A549 (cell line): ENCODE measurements at regions of chr10 and their contacts with region 1.

Region 1: GRCh38 chr10:60208676-60209269 is 180.9 kb downstream of the ANK3 start:
- DNase-seq: peak in 1 of 2 experiments; percentile 59
- ATAC-seq: peak; percentile 60 to 67; a peak in 4 of 6 replicates
- H3K4me3 ChIP-seq: no peak overlapping the region
- H3K27ac ChIP-seq: no peak overlapping the region
- H3K4me1 ChIP-seq: no peaks in the 10 kb centered on the region
- CTCF ChIP-seq: peak; percentile 93
- EP300 ChIP-seq: no peak
- POLR2A ChIP-seq: no peak
- RAD21 ChIP-seq: peak; percentile 94 to 96

Region 2: GRCh38 chr10:59595593-59595992 is 613.2 kb before region 1 on chr10:
- CTCF ChIA-PET with region 1: no interaction called
- POLR2A ChIA-PET with region 1: no interaction called
- DNase-seq: no peak
- ATAC-seq: no peak
- H3K4me3 ChIP-seq: no peak overlapping the region
- H3K27ac ChIP-seq: no peak overlapping the region
- H3K4me1 ChIP-seq: no peaks in the 10 kb centered on the region
- CTCF ChIP-seq: no peak
- EP300 ChIP-seq: no peak
- POLR2A ChIP-seq: no peak
- RAD21 ChIP-seq: no peak

Region 3: GRCh38 chr10:60041489-60042133 is 167.2 kb before region 1 on chr10:
- CTCF ChIA-PET with region 1: no interaction called
- POLR2A ChIA-PET with region 1: no interaction called
- DNase-seq: no peak
- ATAC-seq: no peak
- H3K4me3 ChIP-seq: no peak overlapping the region
- H3K27ac ChIP-seq: no peak overlapping the region
- H3K4me1 ChIP-seq: no peaks in the 10 kb centered on the region
- CTCF ChIP-seq: no peak
- EP300 ChIP-seq: no peak
- POLR2A ChIP-seq: no peak
- RAD21 ChIP-seq: no peak

Region 4: DNA sequence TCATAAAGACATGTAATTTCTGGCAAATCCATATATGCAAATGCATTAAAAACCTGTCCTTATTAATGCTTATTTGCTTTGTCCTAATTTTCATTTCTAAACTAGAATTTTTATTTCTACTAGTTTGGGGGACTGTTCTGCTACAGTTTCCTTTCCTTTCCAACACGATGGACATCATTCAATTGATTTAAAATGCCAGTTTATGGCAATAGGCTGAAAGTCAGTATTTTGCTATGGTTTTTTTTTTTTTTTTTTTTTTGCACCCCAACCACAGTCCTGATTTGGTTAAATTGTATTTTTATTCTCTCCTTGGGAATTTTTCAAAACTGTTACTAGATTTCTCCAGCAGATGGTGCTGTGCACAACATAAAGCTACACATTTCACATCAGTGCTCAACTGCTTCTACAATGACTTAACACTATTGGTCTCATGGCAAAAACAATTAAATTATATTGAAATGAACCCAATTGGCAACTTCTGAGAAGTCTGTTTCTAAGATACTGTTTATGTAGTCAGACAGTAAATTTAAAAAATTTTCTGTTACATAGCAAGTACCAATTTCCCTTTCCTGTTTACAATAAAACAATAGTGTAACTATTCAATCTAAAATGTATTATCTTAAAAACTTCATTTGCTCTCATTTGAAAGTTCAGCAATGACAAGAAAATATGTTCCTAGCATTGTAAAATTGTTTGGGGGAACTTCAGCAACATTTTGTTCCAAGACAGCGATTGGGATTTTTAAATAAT is 108.6 kb before region 1 on chr10:
- CTCF ChIA-PET with region 1: interaction called, 209 read pairs
- POLR2A ChIA-PET with region 1: no interaction called
- DNase-seq: peak; percentile 24 to 64
- ATAC-seq: peak; percentile 59 to 80; a peak in 4 of 6 replicates
- H3K4me3 ChIP-seq: no peak overlapping the region
- H3K27ac ChIP-seq: no peak overlapping the region
- H3K4me1 ChIP-seq: peaks cover 10% of the 10 kb centered on the region; the same call in 2 of the 3 replicates
- CTCF ChIP-seq: peak; percentile 83
- EP300 ChIP-seq: no peak
- POLR2A ChIP-seq: no peak
- RAD21 ChIP-seq: peak; percentile 79 to 82

Region 5: DNA sequence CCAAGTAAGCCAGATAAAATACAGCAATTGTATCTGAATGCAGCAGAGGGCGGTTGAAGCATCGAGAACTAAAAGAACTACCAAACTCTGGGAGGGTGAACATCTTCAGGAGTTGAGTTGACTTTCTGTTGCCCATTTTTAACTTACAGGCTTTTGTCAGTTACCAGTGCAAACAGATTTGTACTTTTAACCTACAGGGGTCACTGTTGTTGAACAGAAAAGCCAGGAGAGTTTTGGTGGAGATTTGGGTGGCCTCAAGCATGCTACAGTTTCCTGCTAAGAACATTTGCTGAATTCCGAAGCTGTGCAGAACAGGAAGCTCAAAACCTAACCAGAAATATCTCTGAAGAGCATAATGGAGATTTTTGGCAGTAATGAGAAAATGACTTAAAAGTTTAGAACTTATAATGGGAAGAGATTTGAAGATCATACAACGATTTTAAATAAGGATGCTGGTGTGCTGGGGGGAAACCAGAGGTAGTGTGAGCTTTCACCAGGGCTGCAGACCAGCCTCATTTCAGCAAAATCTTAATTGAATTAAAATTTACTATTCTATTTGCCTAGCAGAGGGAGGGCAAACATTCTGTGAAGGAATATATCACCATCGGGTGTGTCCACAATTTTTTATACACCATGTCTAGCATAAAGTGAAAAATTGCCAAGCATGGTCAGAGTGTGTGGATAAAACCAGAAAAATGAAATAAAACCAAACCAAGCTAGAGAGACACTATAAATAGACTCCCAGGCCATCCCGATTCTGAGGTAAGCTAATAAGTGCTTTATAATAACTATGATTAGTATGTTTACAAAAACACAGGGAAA is 93.8 kb before region 1 on chr10:
- CTCF ChIA-PET with region 1: interaction called, 147 read pairs
- POLR2A ChIA-PET with region 1: no interaction called
- DNase-seq: peak; percentile 35 to 58
- ATAC-seq: peak; percentile 59 to 80; a peak in 5 of 6 replicates
- H3K4me3 ChIP-seq: no peak overlapping the region
- H3K27ac ChIP-seq: no peak overlapping the region
- H3K4me1 ChIP-seq: 0 out of 3 replicates have a peak, but pooled peaks cover 4% of the 10 kb centered on the region
- CTCF ChIP-seq: peak; percentile 77
- EP300 ChIP-seq: no peak
- POLR2A ChIP-seq: no peak
- RAD21 ChIP-seq: peak; percentile 81 to 87

Region 6: DNA sequence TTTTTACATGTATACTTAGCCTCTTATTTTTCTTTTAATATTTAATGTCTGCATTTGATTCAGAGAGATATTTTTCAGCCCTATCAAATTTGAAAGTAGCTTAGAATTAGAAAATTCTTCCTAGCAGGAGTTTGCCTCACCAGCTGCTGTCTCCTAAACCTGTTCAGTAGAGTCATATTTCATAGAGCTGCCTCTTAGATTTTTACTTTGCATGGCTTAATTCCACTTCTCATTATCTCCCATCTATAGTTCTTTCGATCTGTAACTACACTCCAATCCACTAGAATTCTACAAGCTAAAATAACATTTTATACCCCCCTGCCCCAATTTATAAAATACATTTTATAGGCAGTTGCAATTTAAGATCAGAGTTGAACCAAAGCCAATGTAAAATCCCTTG is 46.1 kb before region 1 on chr10:
- CTCF ChIA-PET with region 1: interaction called, 10 read pairs
- POLR2A ChIA-PET with region 1: no interaction called
- DNase-seq: no peak
- ATAC-seq: no peak
- H3K4me3 ChIP-seq: no peak overlapping the region
- H3K27ac ChIP-seq: no peak overlapping the region
- H3K4me1 ChIP-seq: no peaks in the 10 kb centered on the region
- CTCF ChIP-seq: no peak
- EP300 ChIP-seq: no peak
- POLR2A ChIP-seq: no peak
- RAD21 ChIP-seq: no peak

Region 7: GRCh38 chr10:60434418-60435046 is 225.8 kb after region 1 on chr10:
- CTCF ChIA-PET with region 1: interaction called, 13 read pairs
- POLR2A ChIA-PET with region 1: no interaction called
- DNase-seq: peak; percentile 24 to 67
- ATAC-seq: peak; percentile 73 to 80; a peak in 5 of 6 replicates
- H3K4me3 ChIP-seq: no peak overlapping the region
- H3K27ac ChIP-seq: no peak overlapping the region
- H3K4me1 ChIP-seq: peaks cover 18% of the 10 kb centered on the region
- CTCF ChIP-seq: peak; percentile 92
- EP300 ChIP-seq: no peak
- POLR2A ChIP-seq: no peak
- RAD21 ChIP-seq: peak; percentile 97